IMR-90 (cell line): ENCODE measurements at regions of chr1 and their contacts with region 1.

Region 1: GRCh38 chr1:164772635-164773034 is 213.7 kb downstream of the PBX1 start:
- DNase-seq: peak; percentile 97
- ATAC-seq: peak; percentile 80
- H3K4me3 ChIP-seq: no peak overlapping the region
- H3K27ac ChIP-seq: peak overlapping the region; percentile 66
- H3K4me1 ChIP-seq: peaks cover 35% of the 10 kb centered on the region
- H3K27me3 ChIP-seq: no peaks in the 10 kb centered on the region
- CTCF ChIP-seq: no peak
- POLR2A ChIP-seq: peak; percentile 25; the same call in 1 of the 2 replicates
- RAD21 ChIP-seq: peak; percentile 10; the same call in 1 of the 2 replicates

Region 2: DNA sequence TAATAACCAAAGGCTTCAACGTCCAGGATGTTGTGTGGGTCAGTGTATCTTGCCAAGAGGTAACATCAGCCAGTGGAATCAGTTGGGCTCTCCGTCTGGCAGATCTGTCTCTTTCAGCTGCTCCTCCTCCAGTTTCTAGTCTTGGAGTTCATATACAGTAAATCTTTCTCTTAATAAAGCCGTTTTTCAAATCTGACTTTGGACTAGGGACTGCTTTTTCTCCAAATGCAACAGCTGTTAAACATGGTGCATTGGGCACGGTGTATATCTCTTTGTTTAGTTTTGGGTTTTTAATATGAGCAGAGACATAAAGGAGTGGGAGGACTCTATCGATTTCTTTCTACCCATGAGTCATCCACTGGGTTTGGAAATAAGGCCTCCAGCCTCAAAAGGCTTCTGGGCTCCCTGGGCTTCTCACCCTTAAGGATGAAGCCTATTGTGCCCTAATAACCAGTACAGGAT is 127.8 kb before region 1 on chr1:
- CTCF ChIA-PET with region 1: no interaction called
- POLR2A ChIA-PET with region 1: interaction called, 4 read pairs
- dilution Hi-C with region 1: no loop called
- in situ Hi-C with region 1: no loop called
- intact Hi-C with region 1: loop called (anchors 5 kb)
- DNase-seq: peak; percentile 70
- ATAC-seq: peak; percentile 78
- H3K4me3 ChIP-seq: no peak overlapping the region
- H3K27ac ChIP-seq: no peak overlapping the region; the same call in 1 of the 2 replicates
- H3K4me1 ChIP-seq: peaks cover 15% of the 10 kb centered on the region
- H3K27me3 ChIP-seq: no peaks in the 10 kb centered on the region
- CTCF ChIP-seq: no peak
- POLR2A ChIP-seq: no peak
- RAD21 ChIP-seq: no peak

Region 3: GRCh38 chr1:164707868-164708331 is 64.7 kb before region 1 on chr1:
- CTCF ChIA-PET with region 1: no interaction called
- POLR2A ChIA-PET with region 1: no interaction called
- dilution Hi-C with region 1: no loop called
- in situ Hi-C with region 1: no loop called
- intact Hi-C with region 1: loop called (anchors 5 kb)
- DNase-seq: peak; percentile 88
- ATAC-seq: peak; percentile 81
- H3K4me3 ChIP-seq: no peak overlapping the region
- H3K27ac ChIP-seq: peak overlapping the region; percentile 9
- H3K4me1 ChIP-seq: peaks cover 26% of the 10 kb centered on the region
- H3K27me3 ChIP-seq: no peaks in the 10 kb centered on the region
- CTCF ChIP-seq: no peak
- POLR2A ChIP-seq: no peak
- RAD21 ChIP-seq: no peak

Region 4: GRCh38 chr1:164823486-164824279 is 51.0 kb after region 1 on chr1:
- CTCF ChIA-PET with region 1: no interaction called
- POLR2A ChIA-PET with region 1: no interaction called
- dilution Hi-C with region 1: no loop called
- in situ Hi-C with region 1: no loop called
- intact Hi-C with region 1: no loop called
- DNase-seq: peak; percentile 79
- ATAC-seq: peak; percentile 88
- H3K4me3 ChIP-seq: no peak overlapping the region
- H3K27ac ChIP-seq: no peak overlapping the region
- H3K4me1 ChIP-seq: peaks cover 5% of the 10 kb centered on the region
- H3K27me3 ChIP-seq: no peaks in the 10 kb centered on the region
- CTCF ChIP-seq: 0 out of 2 replicates have a peak, but pooled peaks have one; percentile 16
- POLR2A ChIP-seq: no peak
- RAD21 ChIP-seq: no peak

Region 5: GRCh38 chr1:165793951-165794350 is 1021.3 kb after region 1 on chr1:
- CTCF ChIA-PET with region 1: no interaction called
- POLR2A ChIA-PET with region 1: no interaction called
- dilution Hi-C with region 1: no loop called
- in situ Hi-C with region 1: no loop called
- intact Hi-C with region 1: no loop called
- DNase-seq: peak; percentile 20
- ATAC-seq: no peak
- H3K4me3 ChIP-seq: no peak overlapping the region
- H3K27ac ChIP-seq: no peak overlapping the region
- H3K4me1 ChIP-seq: peaks cover 3% of the 10 kb centered on the region; the same call in 1 of the 2 replicates
- H3K27me3 ChIP-seq: no peaks in the 10 kb centered on the region; the same call in 1 of the 2 replicates
- CTCF ChIP-seq: no peak
- POLR2A ChIP-seq: no peak
- RAD21 ChIP-seq: no peak